Activated CD4-positive, alpha-beta memory T cell treated with anti-CD3 and anti-CD28 coated beads for 36 hours (primary cell): ENCODE measurements at regions of chrX and their contacts with region 1.

Region 1: GRCh38 chrX:118807151-118808017 is 16.2 kb upstream of the ZCCHC12 start:
- DNase-seq: peak; percentile 54
- H3K4me3 Mint-ChIP-seq: no peak overlapping the region
- H3K27ac Mint-ChIP-seq: no peak overlapping the region
- H3K4me1 Mint-ChIP-seq: no peaks in the 10 kb centered on the region
- H3K27me3 Mint-ChIP-seq: peaks cover 4% of the 10 kb centered on the region

Region 2: DNA sequence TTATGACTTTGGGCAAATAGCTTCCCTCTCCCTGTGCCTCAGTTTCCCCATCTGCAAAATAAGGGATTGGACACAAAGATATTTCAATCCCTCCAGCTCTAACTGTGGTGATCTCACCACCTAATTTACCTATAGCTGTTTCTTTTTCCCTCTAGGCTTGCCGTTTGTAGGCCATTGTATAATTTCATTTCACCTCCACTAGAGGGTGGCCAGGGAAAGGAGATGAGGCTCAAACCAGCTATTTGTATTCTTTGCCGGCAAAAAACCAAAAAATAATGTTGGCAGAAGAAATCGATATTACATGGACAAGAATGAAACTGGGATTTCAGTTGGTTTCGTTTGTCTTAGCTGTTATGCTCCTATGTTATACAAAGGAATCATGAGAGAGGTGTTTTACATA is 347.9 kb before region 1 on chrX:
- CTCF ChIA-PET with region 1: interaction called, 7 read pairs
- POLR2A ChIA-PET with region 1: no interaction called
- intact Hi-C with region 1: loop called (anchors 2 kb)
- DNase-seq: peak; percentile 15
- H3K4me3 Mint-ChIP-seq: no peak overlapping the region
- H3K27ac Mint-ChIP-seq: no peak overlapping the region
- H3K4me1 Mint-ChIP-seq: no peaks in the 10 kb centered on the region
- H3K27me3 Mint-ChIP-seq: no peaks in the 10 kb centered on the region

Region 3: DNA sequence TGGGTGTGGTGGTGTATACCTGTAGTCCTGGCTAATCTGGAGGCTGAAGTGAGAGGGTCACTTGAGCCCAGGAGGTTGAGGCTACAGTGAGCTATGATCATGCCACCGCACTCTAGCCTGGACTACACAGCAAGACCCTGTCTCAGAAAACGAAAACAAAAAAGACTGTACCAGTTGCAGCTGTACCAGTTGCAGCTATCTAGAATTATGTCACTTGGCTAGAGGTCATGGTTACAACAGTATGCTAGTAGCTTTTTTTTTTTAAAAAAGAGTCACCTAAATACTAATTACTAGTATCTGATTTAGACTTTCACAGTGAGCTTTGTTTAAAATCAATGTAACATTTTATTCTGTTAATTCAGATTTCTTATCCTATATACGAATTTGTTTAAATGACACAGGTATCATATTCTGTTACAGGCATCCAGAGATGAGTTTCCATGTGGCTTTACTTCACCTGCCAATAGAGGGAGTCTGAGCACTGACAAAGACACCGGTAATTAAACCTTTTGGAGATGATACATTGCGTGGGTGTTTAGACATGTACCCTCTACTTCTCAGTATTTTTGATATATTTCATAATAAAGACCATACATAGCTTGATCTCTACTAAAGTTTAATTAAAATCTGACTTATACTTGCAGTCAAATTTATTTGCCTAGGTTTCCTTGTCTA is 180.2 kb before region 1 on chrX:
- CTCF ChIA-PET with region 1: interaction called, 8 read pairs
- POLR2A ChIA-PET with region 1: no interaction called
- intact Hi-C with region 1: loop called (anchors 2 kb)
- DNase-seq: no peak
- H3K4me3 Mint-ChIP-seq: no peak overlapping the region
- H3K27ac Mint-ChIP-seq: no peak overlapping the region
- H3K4me1 Mint-ChIP-seq: no peaks in the 10 kb centered on the region
- H3K27me3 Mint-ChIP-seq: no peaks in the 10 kb centered on the region

Region 4: DNA sequence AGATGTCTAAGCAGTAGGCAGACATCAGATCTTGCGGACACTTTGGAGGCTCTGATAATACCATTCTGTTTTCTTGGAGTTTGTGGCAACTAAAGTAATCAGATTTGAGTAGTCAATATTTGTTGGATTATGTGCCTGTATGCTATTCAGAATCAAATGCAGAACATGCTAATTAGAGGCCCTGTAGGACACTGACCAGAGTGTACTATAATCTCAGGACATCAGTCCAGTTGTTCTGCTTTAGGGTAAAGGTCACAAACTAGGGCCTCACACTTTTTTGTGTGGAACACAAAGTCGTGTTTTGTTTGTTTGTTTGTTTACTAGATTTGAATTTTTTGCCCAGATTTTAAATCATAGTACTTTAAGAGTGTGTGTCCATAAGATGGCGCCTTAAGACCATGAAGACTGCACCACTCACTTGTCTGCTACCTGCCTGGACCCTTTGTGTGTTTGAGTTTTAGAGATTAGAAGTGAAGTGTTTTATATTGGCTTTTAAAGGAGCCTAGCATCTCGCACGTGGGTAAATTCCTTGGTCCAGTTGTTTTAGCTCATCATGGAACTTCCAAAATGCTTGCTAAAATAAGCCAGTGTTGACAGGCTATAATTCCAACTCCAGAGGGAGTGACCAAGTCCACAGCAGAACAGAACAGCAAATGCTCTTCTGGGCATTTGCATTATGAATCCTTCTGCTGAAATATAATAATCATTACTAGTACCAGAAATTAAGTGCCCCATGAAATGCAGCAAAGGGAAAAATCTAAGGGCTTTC is 45.3 kb before region 1 on chrX:
- CTCF ChIA-PET with region 1: interaction called, 10 read pairs
- POLR2A ChIA-PET with region 1: no interaction called
- intact Hi-C with region 1: loop called (anchors 1 kb)
- DNase-seq: no peak
- H3K4me3 Mint-ChIP-seq: no peak overlapping the region
- H3K27ac Mint-ChIP-seq: no peak overlapping the region
- H3K4me1 Mint-ChIP-seq: no peaks in the 10 kb centered on the region
- H3K27me3 Mint-ChIP-seq: no peaks in the 10 kb centered on the region